ENCODE measurements at regions of chr16 and their contacts with region 1.

Region 1: DNA sequence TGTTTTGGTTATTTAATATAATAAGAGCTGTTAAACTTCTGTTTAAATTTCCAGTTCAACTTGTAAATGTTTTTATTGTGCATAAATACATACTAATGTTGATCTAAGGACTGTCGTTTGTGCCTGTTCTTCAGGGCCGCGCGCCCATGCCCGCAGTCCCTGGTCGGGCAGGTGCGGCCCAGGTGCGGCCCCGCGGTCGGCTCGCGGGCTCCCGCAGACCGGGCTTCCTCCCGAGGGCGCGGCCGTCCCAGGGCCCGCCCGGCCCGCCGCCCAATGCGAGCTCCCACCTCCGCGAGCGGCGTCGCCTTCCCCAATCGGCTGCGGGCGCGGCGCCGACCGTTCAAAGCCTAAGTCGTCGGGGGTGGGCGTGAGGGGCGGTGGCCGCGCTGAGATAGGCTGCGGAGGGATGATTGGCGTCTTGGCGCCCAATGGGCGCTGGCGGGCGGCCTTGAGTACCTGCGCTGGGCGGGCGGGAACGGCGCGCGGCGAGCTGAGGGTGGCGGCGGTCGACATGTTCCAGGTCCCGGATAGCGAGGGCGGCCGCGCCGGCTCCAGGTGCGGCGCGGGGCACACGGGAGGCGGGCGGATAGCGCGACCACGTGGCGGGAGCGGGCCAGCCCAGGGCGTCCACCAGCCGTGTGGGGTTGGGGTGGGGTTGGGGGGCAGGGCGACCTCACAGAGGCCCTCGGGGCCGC is at the start of gene JPT2:
- DNase-seq: peak; percentile 95
- ATAC-seq: peak; percentile 86
- H3K4me3 ChIP-seq: peak within 1 kb of the TSS; percentile 76
- H3K27ac ChIP-seq: peak within 1 kb of the TSS; percentile 76
- H3K4me1 ChIP-seq: peaks cover 29% of the 10 kb centered on the region
- H3K27me3 ChIP-seq: no peaks in the 10 kb centered on the region
- CTCF ChIP-seq: no peak
- total RNA-seq, gene JPT2: 85.2 and 86.5 TPM in 2 replicates

Region 2: DNA sequence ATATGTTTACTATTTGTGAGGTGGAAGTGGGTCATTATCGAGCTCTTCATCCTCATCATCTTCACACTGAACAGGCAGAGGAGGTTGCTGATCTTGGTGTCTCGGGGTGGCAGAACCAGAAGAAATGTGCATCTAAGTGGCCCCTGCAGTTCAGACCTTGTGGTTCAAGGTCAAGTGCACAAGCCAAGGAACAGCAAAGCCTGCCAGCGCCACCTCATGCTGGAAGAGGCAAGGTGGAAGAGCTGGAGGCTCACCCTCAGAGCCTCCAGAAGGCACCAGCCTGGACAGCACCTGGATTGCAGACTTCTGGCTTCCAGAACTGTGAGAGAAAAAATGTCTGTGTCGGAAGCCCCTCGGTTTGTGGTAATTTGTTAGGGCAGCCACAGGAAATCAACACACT is 98.7 kb before region 1 on chr16:
- CTCF ChIA-PET with region 1: no interaction called
- POLR2A ChIA-PET with region 1: no interaction called
- intact Hi-C with region 1: no loop called
- DNase-seq: no peak
- ATAC-seq: no peak
- H3K4me3 ChIP-seq: no peak overlapping the region
- H3K27ac ChIP-seq: no peak overlapping the region
- H3K4me1 ChIP-seq: no peaks in the 10 kb centered on the region; the same call in 1 of the 2 replicates
- H3K27me3 ChIP-seq: no peaks in the 10 kb centered on the region
- CTCF ChIP-seq: no peak

Region 3: GRCh38 chr16:1691956-1692355 is 14.0 kb after region 1 on chr16:
- CTCF ChIA-PET with region 1: interaction called, 12 read pairs
- POLR2A ChIA-PET with region 1: interaction called, 4 read pairs
- intact Hi-C with region 1: loop called (anchors 1 kb)
- DNase-seq: peak; percentile 93
- ATAC-seq: peak; percentile 65
- H3K4me3 ChIP-seq: peak overlapping the region; percentile 48; the same call in 1 of the 2 replicates
- H3K27ac ChIP-seq: peak overlapping the region; percentile 95
- H3K4me1 ChIP-seq: peaks cover 63% of the 10 kb centered on the region
- H3K27me3 ChIP-seq: no peaks in the 10 kb centered on the region
- CTCF ChIP-seq: no peak; the same call in 1 of the 2 replicates

Region 4: DNA sequence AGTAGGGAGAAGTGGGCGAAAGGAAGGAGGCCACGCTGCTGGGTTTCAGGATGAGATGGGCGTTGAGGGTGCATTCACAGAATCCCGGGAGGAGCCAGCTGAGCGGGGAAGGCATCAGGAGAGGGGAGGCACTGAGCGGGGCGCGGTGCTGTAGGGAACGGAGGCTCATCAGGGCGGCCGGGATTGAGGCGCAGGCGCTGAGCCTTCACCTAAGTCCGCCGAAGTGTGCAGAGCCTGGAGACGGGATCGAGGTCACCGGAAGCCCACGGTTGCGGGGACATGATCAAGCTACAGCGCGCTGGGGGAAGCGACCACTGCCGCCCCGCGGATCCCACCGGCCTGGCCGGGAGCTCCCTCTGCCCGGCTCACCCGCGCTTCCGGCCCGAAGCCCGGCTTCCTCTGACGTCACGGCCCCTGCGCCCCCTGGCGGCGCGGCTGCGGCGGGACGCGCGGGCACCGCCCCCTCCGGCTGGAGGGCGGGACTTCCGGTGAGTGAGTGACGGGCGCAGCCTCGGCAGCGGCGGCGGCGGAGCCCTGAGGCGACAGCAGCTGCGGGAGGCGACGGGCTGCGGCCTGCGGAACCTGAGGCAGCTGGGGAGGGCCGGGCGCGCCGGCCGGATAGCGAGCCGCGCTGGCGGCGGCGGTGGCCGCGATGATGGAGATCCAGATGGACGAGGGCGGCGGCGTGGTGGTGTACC is 27.9 kb after region 1 on chr16 and contains the start of gene MAPK8IP3:
- CTCF ChIA-PET with region 1: interaction called, 6 read pairs
- POLR2A ChIA-PET with region 1: interaction called, 5 read pairs
- intact Hi-C with region 1: loop called (anchors 2 kb)
- DNase-seq: peak; percentile 90
- ATAC-seq: peak; percentile 62
- H3K4me3 ChIP-seq: peak within 1 kb of the TSS; percentile 96
- H3K27ac ChIP-seq: peak within 1 kb of the TSS; percentile 87
- H3K4me1 ChIP-seq: peaks cover 27% of the 10 kb centered on the region
- H3K27me3 ChIP-seq: no peaks in the 10 kb centered on the region
- CTCF ChIP-seq: peak; percentile 66
- total RNA-seq, gene MAPK8IP3: 41.1 and 59.7 TPM in 2 replicates

Region 5: GRCh38 chr16:1772736-1773584 is 95.0 kb after region 1 on chr16 and contains the starts of genes EME2 and MRPS34:
- CTCF ChIA-PET with region 1: no interaction called
- POLR2A ChIA-PET with region 1: no interaction called
- intact Hi-C with region 1: loop called (anchors 5 kb)
- DNase-seq: peak; percentile 75
- ATAC-seq: peak; percentile 44
- H3K4me3 ChIP-seq: peak within 1 kb of the TSS; percentile 86
- H3K27ac ChIP-seq: peak within 1 kb of the TSS; percentile 65
- H3K4me1 ChIP-seq: peaks cover 12% of the 10 kb centered on the region; the same call in 1 of the 2 replicates
- H3K27me3 ChIP-seq: no peaks in the 10 kb centered on the region
- CTCF ChIP-seq: peak; percentile 63
- total RNA-seq, gene EME2: 11.3 and 12.5 TPM in 2 replicates
- total RNA-seq, gene MRPS34: 248 and 258 TPM in 2 replicates

Region 6: GRCh38 chr16:1782352-1783091 is 104.6 kb after region 1 on chr16 and contains the starts of genes NUBP2 and SPSB3:
- CTCF ChIA-PET with region 1: no interaction called
- POLR2A ChIA-PET with region 1: interaction called, 26 read pairs
- intact Hi-C with region 1: no loop called
- DNase-seq: peak; percentile 98
- ATAC-seq: peak; percentile 85
- H3K4me3 ChIP-seq: peak within 1 kb of the TSS; percentile 89
- H3K27ac ChIP-seq: no peak within 1 kb of the TSS
- H3K4me1 ChIP-seq: peaks cover 11% of the 10 kb centered on the region; the same call in 1 of the 2 replicates
- H3K27me3 ChIP-seq: no peaks in the 10 kb centered on the region
- CTCF ChIP-seq: no peak
- total RNA-seq, gene NUBP2: 95.1 and 128 TPM in 2 replicates
- total RNA-seq, gene SPSB3: 27.4 and 30.4 TPM in 2 replicates